Calu3 (cell line): ENCODE measurements at regions of chr2 and their contacts with region 1.

Region 1: DNA sequence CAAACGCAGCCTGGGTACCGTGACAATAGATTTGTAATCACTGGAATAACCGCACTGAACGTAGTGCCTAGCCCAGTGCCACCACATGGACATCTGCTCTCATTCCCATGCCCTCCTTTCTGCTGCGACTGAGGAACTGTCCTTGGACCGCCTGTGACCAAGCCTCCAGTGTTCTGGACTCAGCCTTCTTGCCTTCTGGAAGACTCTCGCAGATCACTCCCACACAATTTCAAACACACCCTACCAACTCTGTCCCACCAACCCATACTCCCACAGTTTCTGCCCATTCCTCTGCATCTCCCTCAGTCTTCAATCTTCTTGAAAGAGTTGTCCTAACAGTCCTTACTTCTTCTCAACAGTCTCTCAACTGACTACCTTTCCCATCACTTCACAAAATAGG is 2.1 kb downstream of the RNF149 start:
- DNase-seq: no peak
- H3K4me3 Mint-ChIP-seq: peak overlapping the region; percentile 73
- H3K27ac Mint-ChIP-seq: peak overlapping the region; percentile 37
- H3K4me1 Mint-ChIP-seq: peaks cover 43% of the 10 kb centered on the region
- H3K27me3 Mint-ChIP-seq: no peaks in the 10 kb centered on the region
- CTCF ChIP-seq: no peak

Region 2: DNA sequence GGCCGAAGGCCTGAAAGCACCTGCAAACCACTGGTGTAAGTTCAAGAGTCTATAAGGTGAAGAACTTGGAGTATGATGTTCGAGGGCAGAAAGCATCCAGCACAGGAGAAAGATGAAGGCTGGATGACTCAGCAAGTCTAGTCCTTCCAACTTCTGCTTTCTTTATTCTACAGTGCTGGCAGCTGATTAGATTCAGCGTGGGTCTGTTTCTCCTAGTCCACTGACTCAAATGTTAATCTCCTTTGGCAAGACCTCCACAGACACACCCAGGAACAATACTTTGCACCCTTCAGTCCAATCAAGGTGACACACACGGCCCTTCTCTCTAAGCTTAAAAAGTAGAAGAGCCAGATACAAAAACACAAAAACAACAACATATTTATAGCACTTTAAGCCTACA is 792.8 kb before region 1 on chr2:
- CTCF ChIA-PET with region 1: no interaction called
- intact Hi-C with region 1: no loop called
- DNase-seq: no peak
- H3K4me3 Mint-ChIP-seq: no peak overlapping the region
- H3K27ac Mint-ChIP-seq: no peak overlapping the region
- H3K4me1 Mint-ChIP-seq: no peaks in the 10 kb centered on the region
- H3K27me3 Mint-ChIP-seq: no peaks in the 10 kb centered on the region
- CTCF ChIP-seq: no peak

Region 3: GRCh38 chr2:101149241-101150192 is 156.9 kb before region 1 on chr2:
- CTCF ChIA-PET with region 1: no interaction called
- intact Hi-C with region 1: no loop called
- DNase-seq: peak; percentile 36
- H3K4me3 Mint-ChIP-seq: peak overlapping the region; percentile 78
- H3K27ac Mint-ChIP-seq: peak overlapping the region; percentile 29
- H3K4me1 Mint-ChIP-seq: peaks cover 58% of the 10 kb centered on the region
- H3K27me3 Mint-ChIP-seq: no peaks in the 10 kb centered on the region
- CTCF ChIP-seq: no peak

Region 4: GRCh38 chr2:101330253-101330933 is 24.0 kb after region 1 on chr2:
- CTCF ChIA-PET with region 1: interaction called, 4 read pairs
- intact Hi-C with region 1: loop called (anchors 1 kb)
- DNase-seq: peak; percentile 83
- H3K4me3 Mint-ChIP-seq: no peak overlapping the region
- H3K27ac Mint-ChIP-seq: peak overlapping the region; percentile 66
- H3K4me1 Mint-ChIP-seq: no peaks in the 10 kb centered on the region
- H3K27me3 Mint-ChIP-seq: no peaks in the 10 kb centered on the region
- CTCF ChIP-seq: no peak

Region 5: GRCh38 chr2:101349893-101350662 is 43.7 kb after region 1 on chr2:
- CTCF ChIA-PET with region 1: no interaction called
- intact Hi-C with region 1: no loop called
- DNase-seq: no peak
- H3K4me3 Mint-ChIP-seq: no peak overlapping the region
- H3K27ac Mint-ChIP-seq: no peak overlapping the region
- H3K4me1 Mint-ChIP-seq: peaks cover 9% of the 10 kb centered on the region
- H3K27me3 Mint-ChIP-seq: no peaks in the 10 kb centered on the region
- CTCF ChIP-seq: no peak

Region 6: DNA sequence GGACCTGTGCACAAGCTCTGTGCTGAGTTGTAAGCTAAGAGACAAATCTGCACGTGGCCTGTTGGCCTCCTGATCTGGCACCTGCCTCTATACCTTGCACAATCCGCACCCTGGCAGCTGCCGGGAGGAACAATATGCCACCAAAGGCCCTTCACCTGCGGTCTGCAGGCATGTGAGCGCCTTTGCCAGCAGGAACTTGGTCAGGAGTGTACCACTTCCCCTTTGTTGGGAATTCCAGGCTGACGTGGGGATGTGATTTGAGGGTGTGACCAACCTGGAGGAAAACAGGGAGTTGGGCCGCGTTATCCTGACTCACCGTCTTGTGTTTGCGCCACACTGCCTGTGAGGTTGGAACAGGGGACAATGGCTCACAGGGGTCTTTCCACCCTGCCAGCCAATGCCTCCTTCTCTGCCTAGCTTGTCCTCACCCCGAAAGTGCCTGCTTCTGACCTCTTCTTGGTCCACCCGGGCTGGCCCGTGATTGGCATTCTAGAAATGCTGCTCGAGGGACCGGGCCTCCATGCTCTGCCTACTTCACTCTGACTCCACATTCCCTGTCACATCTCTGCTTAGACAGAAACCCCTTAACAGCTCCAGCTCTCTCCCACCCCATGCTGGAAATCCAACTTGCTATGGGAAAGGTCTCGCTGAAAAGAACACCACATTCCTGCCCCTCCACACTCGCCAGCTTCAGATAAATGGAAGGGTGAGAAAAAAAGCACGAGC is 324.0 kb after region 1 on chr2:
- CTCF ChIA-PET with region 1: no interaction called
- intact Hi-C with region 1: no loop called
- DNase-seq: peak; percentile 90
- H3K4me3 Mint-ChIP-seq: peak overlapping the region; percentile 13
- H3K27ac Mint-ChIP-seq: peak overlapping the region; percentile 82
- H3K4me1 Mint-ChIP-seq: peaks cover 29% of the 10 kb centered on the region
- H3K27me3 Mint-ChIP-seq: no peaks in the 10 kb centered on the region
- CTCF ChIP-seq: no peak